Ascending aorta (tissue), 2 donors: ENCODE measurements at regions of chr7 and their contacts with region 1.

Region 1: DNA sequence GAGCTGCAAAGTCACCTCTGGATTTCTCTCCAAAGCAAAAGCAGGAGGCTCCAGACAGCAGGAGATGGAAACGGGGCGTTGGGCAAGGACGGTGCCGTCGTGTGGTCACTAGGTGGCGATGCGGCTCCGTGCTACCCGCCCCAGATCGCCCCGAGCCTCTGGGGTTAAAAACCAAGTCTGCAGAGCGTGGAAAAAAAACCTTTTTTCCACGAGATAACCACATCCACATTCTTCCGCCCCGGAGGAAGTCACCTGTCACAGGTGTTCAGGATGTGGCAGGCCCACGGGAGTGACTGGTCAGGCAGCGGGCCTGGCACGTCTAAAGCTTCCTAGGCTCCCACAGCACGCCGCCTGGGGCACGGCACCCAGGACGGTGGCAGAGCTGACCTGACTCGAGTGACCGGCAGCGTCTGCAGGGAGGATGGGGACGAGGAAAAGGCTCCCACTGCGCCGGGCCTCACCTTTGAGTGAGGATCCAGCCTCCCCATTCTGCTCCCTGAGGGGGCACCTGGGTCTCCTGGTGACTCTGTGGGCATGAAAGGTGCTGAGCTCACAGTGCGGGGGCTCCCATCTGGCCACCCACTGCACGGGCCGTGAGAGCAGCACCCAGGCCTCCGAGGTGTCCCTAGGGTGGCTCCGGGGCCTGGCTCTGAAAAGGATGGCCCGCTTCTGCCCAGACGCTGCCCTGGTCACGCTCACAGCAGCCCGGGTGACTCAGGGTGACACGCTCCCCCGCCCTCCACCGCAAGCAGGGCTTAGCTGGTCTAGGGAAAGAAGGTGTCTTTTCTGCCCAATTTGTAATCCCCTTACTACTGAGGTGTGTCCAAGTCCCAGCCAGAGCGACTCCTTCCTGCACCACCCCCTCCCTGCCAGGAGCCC is 71.3 kb upstream of the TNRC18 start:
- DNase-seq: peak in 1 of 2 donors; percentile 81
- H3K4me3 ChIP-seq: peak overlapping the region; percentile 46 to 66
- H3K27ac ChIP-seq: peak overlapping the region; percentile 71 to 83
- H3K4me1 ChIP-seq: peaks cover 9 to 16% of the 10 kb centered on the region in 2 donors
- H3K27me3 ChIP-seq: no peaks in the 10 kb centered on the region
- CTCF ChIP-seq: peak; percentile 91 to 95 (median 94)

Region 2: GRCh38 chr7:5559576-5559975 is 64.7 kb after region 1 on chr7:
- intact Hi-C with region 1: loop called (anchors 1 kb)
- DNase-seq: no peak
- H3K4me3 ChIP-seq: no peak overlapping the region
- H3K27ac ChIP-seq: peak overlapping the region in 1 of 2 donors; percentile 17
- H3K4me1 ChIP-seq: peaks cover 18 to 44% of the 10 kb centered on the region in 2 donors
- H3K27me3 ChIP-seq: no peaks in the 10 kb centered on the region
- CTCF ChIP-seq: no peak

Region 3: DNA sequence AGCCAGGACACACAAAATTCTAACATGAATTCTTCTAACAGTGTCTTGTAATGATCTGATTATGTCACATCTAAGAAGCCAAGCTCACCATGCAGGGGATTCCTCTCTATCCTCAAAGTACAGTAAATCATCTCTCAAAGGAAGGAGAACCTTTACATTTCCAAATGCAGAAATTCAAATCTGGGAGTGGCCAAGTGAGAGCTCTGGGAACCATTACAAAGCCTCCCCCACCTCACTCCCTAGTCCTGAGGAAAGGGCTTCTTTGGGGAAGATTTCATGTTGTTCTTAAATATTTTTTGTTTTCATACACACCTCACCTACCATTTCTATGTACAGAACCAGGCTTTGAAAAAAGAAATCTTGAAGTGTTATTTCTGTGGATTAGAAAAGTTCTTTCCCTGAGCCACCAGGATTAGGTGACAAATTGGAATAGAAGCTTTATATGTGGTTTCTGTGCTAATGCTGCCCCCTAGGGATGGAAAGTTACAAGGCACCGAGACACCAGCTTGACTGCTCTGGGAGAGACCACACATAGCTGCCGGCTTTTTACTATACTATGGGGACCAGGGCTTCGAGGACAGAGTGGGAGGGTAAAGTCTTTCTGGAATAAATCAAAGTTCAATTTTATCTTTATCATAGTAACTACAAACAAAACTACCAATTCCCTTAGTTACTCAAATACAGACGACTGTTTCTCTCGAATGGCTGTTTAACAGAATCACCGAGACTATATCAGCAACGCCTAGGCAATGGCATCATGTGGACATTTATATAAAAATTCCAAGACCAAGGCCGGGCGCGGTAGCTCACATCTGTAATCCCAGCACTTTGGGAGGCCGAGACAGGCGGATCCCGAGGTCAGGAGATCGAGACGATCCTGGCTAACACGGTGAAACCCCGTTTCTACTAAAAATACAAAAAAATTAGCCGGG is 170.4 kb after region 1 on chr7:
- intact Hi-C with region 1: loop called (anchors 1 kb)
- DNase-seq: peak; percentile 23 to 88
- H3K4me3 ChIP-seq: no peak overlapping the region
- H3K27ac ChIP-seq: no peak overlapping the region
- H3K4me1 ChIP-seq: peaks cover 0 to 2% of the 10 kb centered on the region in 2 donors
- H3K27me3 ChIP-seq: no peaks in the 10 kb centered on the region
- CTCF ChIP-seq: peak; percentile 84 to 87 (median 84)

Region 4: GRCh38 chr7:5704534-5704922 is 209.6 kb after region 1 on chr7:
- intact Hi-C with region 1: loop called (anchors 1 kb)
- DNase-seq: peak in 1 of 2 donors; percentile 93
- H3K4me3 ChIP-seq: peak overlapping the region in 1 of 2 donors; percentile 23
- H3K27ac ChIP-seq: peak overlapping the region; percentile 58 to 60
- H3K4me1 ChIP-seq: peaks cover 11 to 21% of the 10 kb centered on the region in 2 donors
- H3K27me3 ChIP-seq: no peaks in the 10 kb centered on the region
- CTCF ChIP-seq: peak; percentile 89 to 93 (median 90)